OCI-LY7 (cell line): ENCODE measurements at regions of chr12 and their contacts with region 1.

Region 1: GRCh38 chr12:77925536-77926108 is 94.9 kb downstream of the NAV3 start:
- DNase-seq: peak; percentile 90
- H3K4me3 ChIP-seq: no peak overlapping the region
- H3K27ac ChIP-seq: no peak overlapping the region
- H3K4me1 ChIP-seq: no peaks in the 10 kb centered on the region
- CTCF ChIP-seq: peak; percentile 100

Region 2: DNA sequence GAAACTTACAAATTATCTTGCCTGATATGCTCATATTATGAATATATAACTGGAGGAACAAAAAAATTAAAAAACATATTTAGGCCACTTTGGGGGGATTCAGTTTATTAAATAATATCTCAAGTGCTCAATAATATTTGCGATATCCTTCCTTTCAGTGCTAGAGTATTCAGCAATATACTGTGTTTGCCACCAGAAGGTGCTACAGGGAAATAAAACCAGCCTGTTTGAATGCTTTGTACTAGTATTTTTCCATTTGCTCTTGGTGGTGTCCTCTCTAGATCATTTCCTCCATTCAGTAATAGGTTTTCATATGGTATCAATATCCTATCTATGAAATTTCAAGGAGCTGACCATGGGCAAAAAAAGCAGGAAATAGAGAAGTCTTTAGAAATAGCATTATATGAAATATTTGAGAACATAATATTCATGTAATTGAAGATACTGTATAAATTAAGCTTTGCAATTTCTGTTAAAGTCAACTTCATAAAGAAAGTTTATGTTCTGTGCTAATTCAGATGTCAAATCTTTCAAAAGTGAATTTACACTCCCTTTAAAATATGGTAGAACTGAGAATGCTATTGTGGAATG is 201.2 kb before region 1 on chr12:
- CTCF ChIA-PET with region 1: no interaction called
- POLR2A ChIA-PET with region 1: no interaction called
- intact Hi-C with region 1: loop called (anchors 5 kb)
- DNase-seq: peak; percentile 72
- H3K4me3 ChIP-seq: no peak overlapping the region
- H3K27ac ChIP-seq: no peak overlapping the region
- H3K4me1 ChIP-seq: peaks cover 12% of the 10 kb centered on the region
- CTCF ChIP-seq: peak; percentile 97

Region 3: DNA sequence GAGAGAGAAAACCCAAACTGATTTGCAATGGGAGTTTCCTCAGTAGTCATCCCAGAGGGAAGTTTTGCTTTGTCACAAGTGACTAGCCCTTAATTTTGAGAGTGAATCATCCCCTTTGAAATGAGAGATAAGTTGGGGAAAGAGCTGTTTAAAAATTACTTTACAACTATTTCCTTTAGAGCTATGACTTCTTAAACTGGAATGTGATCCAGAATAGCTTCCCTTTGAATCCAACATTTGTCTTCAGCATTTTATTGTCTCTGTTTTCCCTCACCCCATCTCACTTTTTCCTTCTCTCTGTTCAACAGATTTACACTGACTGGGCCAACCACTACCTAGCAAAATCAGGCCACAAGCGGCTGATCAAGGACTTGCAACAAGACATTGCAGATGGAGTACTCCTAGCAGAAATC is 14.4 kb after region 1 on chr12:
- CTCF ChIA-PET with region 1: no interaction called
- POLR2A ChIA-PET with region 1: interaction called, 11 read pairs
- intact Hi-C with region 1: no loop called
- DNase-seq: no peak
- H3K4me3 ChIP-seq: no peak overlapping the region
- H3K27ac ChIP-seq: no peak overlapping the region
- H3K4me1 ChIP-seq: peaks cover 11% of the 10 kb centered on the region
- CTCF ChIP-seq: no peak

Region 4: DNA sequence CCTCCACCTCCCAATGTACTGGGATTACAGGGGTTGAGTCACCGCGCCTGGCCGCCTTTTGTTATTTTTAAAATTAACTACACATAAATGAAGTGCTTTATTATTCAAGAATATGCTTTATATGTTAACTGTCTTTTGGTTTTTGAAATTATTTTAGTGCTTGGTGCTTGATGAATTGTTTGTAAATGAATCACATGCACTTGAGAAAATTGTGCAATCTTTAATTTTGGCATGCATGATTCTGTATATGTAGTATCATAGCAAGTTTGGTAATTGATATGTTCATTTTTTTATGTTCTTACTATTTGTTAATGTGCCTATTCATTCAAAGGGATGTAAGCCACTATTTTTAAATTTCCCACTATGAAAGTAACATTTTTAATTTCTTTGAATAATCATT is 345.9 kb after region 1 on chr12:
- CTCF ChIA-PET with region 1: no interaction called
- POLR2A ChIA-PET with region 1: no interaction called
- intact Hi-C with region 1: no loop called
- DNase-seq: no peak
- H3K4me3 ChIP-seq: no peak overlapping the region
- H3K27ac ChIP-seq: no peak overlapping the region
- H3K4me1 ChIP-seq: no peaks in the 10 kb centered on the region
- CTCF ChIP-seq: no peak